IMR-90 (cell line): ENCODE measurements at regions of chr6 and their contacts with region 1.

Region 1: DNA sequence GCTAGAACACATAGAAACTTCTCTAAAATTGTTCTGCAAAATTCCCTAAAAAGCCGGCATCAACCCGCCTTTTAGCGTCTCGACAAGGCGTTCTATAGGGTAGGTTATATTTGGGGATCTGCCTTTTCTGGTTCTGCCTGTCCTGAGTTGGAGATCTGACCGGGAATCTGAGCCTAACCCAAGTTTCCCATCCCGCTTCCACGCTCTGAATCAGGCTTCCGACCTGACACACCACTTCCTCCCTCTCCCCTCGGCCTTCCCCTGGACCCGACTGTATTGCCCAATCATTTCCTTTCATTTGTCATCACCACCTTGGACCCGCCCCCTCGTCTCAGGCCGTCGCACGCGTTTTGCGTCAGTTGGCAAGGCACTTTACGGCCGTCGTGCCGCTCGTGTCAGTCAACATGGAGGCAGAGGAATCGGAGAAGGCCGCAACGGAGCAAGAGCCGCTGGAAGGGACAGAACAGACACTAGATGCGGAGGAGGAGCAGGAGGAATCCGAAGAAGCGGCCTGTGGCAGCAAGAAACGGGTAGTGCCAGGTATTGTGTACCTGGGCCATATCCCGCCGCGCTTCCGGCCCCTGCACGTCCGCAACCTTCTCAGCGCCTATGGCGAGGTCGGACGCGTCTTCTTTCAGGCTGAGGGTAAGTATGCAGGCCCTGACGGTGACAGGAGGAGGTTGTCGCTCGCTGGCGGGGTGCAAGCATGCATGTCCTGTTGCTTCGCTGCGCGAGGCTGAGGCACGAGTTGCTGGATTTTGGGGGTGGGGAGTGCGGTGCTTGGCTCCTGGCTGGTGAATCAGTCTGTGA is at the start of gene ABT1:
- DNase-seq: peak; percentile 98
- ATAC-seq: peak; percentile 83
- H3K4me3 ChIP-seq: peak within 1 kb of the TSS; percentile 91
- H3K27ac ChIP-seq: peak within 1 kb of the TSS; percentile 85
- H3K4me1 ChIP-seq: peaks cover 3% of the 10 kb centered on the region; the same call in 1 of the 2 replicates
- H3K27me3 ChIP-seq: no peaks in the 10 kb centered on the region
- CTCF ChIP-seq: no peak
- POLR2A ChIP-seq: peak; percentile 71; the same call in 1 of the 2 replicates
- RAD21 ChIP-seq: no peak
- total RNA-seq, gene ABT1: 12.2 and 15.4 TPM in 2 replicates

Region 2: DNA sequence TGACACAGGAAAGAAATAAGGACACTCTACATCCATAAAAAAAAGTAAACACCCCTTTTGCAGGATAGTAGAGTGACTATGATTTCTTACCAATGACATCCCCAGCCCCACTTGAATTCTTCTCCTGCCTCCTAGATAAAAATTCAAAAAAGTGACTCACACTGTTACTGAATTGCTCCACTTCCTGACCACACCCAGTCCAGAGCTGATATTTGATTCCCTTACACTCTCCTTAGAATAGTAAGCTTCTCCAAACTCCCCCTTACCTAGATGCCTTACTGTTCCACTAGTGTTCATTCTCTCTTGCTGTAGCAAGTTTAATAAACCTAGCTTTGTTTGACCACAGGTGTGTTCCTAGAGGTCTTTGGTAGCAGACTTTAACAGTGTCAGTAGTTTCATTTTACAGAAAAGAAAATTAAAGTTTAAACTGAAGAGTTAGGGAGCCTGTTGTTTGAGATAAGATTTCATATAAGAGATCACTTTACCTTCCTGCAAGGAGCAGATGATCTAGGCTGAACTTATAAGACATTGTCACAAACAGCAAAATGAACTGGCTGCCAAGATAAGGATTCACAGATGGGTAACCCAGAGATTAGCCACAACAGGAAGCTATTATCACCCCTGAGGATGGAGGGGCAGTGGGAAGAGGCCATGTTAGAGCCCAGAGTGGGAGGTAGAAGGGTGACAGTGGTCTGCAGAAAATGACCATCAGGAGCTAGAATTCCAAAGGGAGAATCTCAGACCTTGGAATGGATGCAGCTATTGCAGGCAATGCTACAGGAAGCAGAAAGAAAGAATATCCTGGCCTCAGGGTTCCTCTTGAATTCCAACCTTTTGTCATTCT is 260.2 kb before region 1 on chr6:
- CTCF ChIA-PET with region 1: interaction called, 14 read pairs
- POLR2A ChIA-PET with region 1: no interaction called
- dilution Hi-C with region 1: no loop called
- in situ Hi-C with region 1: no loop called
- intact Hi-C with region 1: loop called (anchors 1 kb)
- DNase-seq: peak; percentile 74
- ATAC-seq: peak; percentile 78
- H3K4me3 ChIP-seq: no peak overlapping the region
- H3K27ac ChIP-seq: peak overlapping the region; percentile 15; the same call in 1 of the 2 replicates
- H3K4me1 ChIP-seq: peaks cover 7% of the 10 kb centered on the region
- H3K27me3 ChIP-seq: no peaks in the 10 kb centered on the region
- CTCF ChIP-seq: no peak
- POLR2A ChIP-seq: no peak
- RAD21 ChIP-seq: no peak

Region 3: GRCh38 chr6:26576929-26577719 is 19.7 kb before region 1 on chr6:
- CTCF ChIA-PET with region 1: interaction called, 24 read pairs
- POLR2A ChIA-PET with region 1: interaction called, 3 read pairs
- dilution Hi-C with region 1: no loop called
- in situ Hi-C with region 1: no loop called
- intact Hi-C with region 1: loop called (anchors 1 kb)
- DNase-seq: peak; percentile 88
- ATAC-seq: peak; percentile 90
- H3K4me3 ChIP-seq: peak overlapping the region; percentile 44
- H3K27ac ChIP-seq: no peak overlapping the region
- H3K4me1 ChIP-seq: no peaks in the 10 kb centered on the region
- H3K27me3 ChIP-seq: peaks cover 5% of the 10 kb centered on the region
- CTCF ChIP-seq: no peak
- POLR2A ChIP-seq: no peak
- RAD21 ChIP-seq: no peak

Region 4: GRCh38 chr6:27394073-27394472 is 797.3 kb after region 1 on chr6:
- CTCF ChIA-PET with region 1: no interaction called
- POLR2A ChIA-PET with region 1: no interaction called
- dilution Hi-C with region 1: no loop called
- in situ Hi-C with region 1: no loop called
- intact Hi-C with region 1: no loop called
- DNase-seq: no peak
- ATAC-seq: no peak
- H3K4me3 ChIP-seq: no peak overlapping the region
- H3K27ac ChIP-seq: no peak overlapping the region
- H3K4me1 ChIP-seq: no peaks in the 10 kb centered on the region
- H3K27me3 ChIP-seq: no peaks in the 10 kb centered on the region
- CTCF ChIP-seq: no peak
- POLR2A ChIP-seq: no peak
- RAD21 ChIP-seq: no peak